Adrenal gland (tissue), 19 donors: ENCODE measurements at regions of chr1 and their contacts with region 1.

Region 1: DNA sequence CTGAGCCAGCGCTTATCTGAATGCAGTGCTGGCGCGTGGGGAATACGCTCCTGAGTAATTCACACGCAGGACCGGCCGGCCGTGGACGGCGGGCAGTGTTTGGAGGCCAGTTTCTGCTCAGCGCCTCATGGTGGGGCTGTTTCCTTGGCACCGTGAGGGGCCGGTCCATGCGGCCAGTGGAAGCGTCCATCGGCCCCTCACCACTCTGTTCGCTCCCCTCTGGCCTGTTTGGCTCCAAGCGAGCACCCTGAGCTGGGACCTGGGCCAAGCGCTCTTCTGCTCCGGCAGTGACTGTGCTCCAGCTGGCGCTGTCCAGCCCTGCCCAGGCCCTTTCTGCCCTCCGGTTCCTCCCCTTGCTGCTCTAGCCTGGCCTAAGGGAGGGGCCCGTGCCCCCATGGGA is 16.3 kb upstream of the PLCH2 start:
- DNase-seq: peak in 6 of 7 donors; percentile 70 to 92 (median 82)
- H3K4me3 ChIP-seq: no peak overlapping the region
- H3K27ac ChIP-seq: no peak overlapping the region
- H3K4me1 ChIP-seq: peaks cover 7 to 18% of the 10 kb centered on the region in 2 donors
- H3K27me3 ChIP-seq: peaks cover 23% of the 10 kb centered on the region
- CTCF ChIP-seq: peak in 5 of 6 experiments; percentile 25 to 47 (median 40)
- POLR2A ChIP-seq: no peak

Region 2: DNA sequence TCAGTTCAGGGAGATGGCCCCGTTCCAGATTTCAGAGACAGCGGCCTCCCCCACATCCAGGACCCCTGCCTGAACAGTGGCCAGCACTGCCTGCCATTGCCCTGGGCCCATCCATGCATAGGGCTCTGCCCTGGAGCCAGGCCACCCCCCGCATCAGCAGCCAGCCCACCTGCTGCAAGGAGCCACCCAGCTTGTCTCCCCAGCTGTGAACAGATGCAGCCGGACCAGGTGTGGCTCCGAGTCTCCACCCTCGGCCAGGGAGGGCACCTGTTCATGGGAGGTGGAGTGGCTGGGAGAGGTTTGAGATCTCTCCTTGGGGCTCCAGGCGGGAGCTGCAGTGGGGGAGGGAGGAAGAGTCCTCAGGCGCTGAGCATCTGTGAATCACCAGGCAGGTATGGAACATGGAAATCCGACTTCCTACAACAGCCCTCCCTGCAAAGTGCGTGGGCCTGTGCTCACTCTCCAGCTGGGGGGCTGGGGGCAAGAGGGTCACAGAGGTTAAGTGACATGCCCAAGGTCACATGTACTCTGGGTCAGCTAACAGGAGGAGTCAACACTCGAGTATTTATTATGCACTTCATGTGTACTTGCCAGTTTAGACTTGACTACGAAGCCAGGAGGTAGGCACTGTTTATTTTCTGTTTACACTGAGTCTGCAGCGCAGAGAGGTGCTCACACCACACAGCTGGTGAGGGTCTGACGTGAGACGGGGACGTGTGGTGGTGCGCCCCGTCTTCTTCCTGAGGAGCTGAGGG is 75.1 kb after region 1 on chr1:
- intact Hi-C with region 1: loop called in 1 of 2 experiments (anchors 5 kb)
- DNase-seq: no peak
- H3K4me3 ChIP-seq: no peak overlapping the region
- H3K27ac ChIP-seq: no peak overlapping the region
- H3K4me1 ChIP-seq: peaks cover 2 to 12% of the 10 kb centered on the region in 2 donors
- H3K27me3 ChIP-seq: peaks cover 35% of the 10 kb centered on the region
- CTCF ChIP-seq: no peak
- POLR2A ChIP-seq: no peak